Panc1 (cell line): ENCODE measurements at regions of chr5 and their contacts with region 1.

Region 1: GRCh38 chr5:133996683-133997252 is 8.0 kb downstream of the VDAC1 start:
- DNase-seq: no peak
- ATAC-seq: no peak
- H3K4me3 ChIP-seq: no peak overlapping the region
- H3K27ac ChIP-seq: peak overlapping the region; percentile 64
- H3K4me1 ChIP-seq: peaks cover 91% of the 10 kb centered on the region
- H3K27me3 ChIP-seq: no peaks in the 10 kb centered on the region
- CTCF ChIP-seq: peak; percentile 84

Region 2: GRCh38 chr5:133957591-133957990 is 39.2 kb before region 1 on chr5:
- CTCF ChIA-PET with region 1: no interaction called
- POLR2A ChIA-PET with region 1: no interaction called
- in situ Hi-C with region 1: no loop called
- intact Hi-C with region 1: no loop called
- DNase-seq: no peak
- ATAC-seq: no peak
- H3K4me3 ChIP-seq: no peak overlapping the region
- H3K27ac ChIP-seq: no peak overlapping the region
- H3K4me1 ChIP-seq: no peaks in the 10 kb centered on the region
- H3K27me3 ChIP-seq: no peaks in the 10 kb centered on the region
- CTCF ChIP-seq: no peak

Region 3: DNA sequence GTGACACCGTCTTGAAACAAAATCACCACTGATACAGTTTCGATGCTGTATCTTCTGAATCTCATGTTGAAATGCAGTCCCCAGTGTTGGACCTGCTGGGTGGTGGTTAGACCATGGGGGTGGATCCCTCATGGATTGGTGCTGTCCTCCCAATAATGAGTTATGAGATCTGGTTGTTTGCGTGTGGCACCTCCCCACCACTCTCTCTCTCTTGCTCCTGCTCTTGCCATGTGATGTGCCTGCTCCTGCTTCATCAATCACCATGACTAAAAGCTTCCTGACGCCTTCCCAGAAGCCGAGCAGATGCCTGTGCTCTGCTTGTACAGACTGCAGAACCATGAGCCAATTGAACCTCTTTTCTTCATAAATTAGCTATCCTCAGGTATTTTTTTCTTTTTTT is 13.1 kb before region 1 on chr5:
- CTCF ChIA-PET with region 1: interaction called, 10 read pairs
- POLR2A ChIA-PET with region 1: interaction called, 4 read pairs
- in situ Hi-C with region 1: no loop called
- intact Hi-C with region 1: no loop called
- DNase-seq: no peak
- ATAC-seq: no peak
- H3K4me3 ChIP-seq: no peak overlapping the region
- H3K27ac ChIP-seq: no peak overlapping the region
- H3K4me1 ChIP-seq: peaks cover 5% of the 10 kb centered on the region; the same call in 1 of the 2 replicates
- H3K27me3 ChIP-seq: no peaks in the 10 kb centered on the region
- CTCF ChIP-seq: no peak